B cell (primary cell): ENCODE measurements at regions of chr10 and their contacts with region 1.

Region 1: GRCh38 chr10:69408318-69409175 is 8.2 kb downstream of the TACR2 start:
- DNase-seq: peak; percentile 95
- ATAC-seq: peak; percentile 84
- H3K4me3 ChIP-seq: peak overlapping the region in 4 of 5 experiments; percentile 24 to 58 (median 40)
- H3K4me3 Mint-ChIP-seq: peak overlapping the region; percentile 81
- H3K27ac ChIP-seq: peak overlapping the region; percentile 67 to 73
- H3K27ac Mint-ChIP-seq: peak overlapping the region; percentile 89
- H3K4me1 ChIP-seq: peaks cover 21 to 39% of the 10 kb centered on the region in 2 donors
- H3K4me1 Mint-ChIP-seq: peaks cover 27% of the 10 kb centered on the region
- H3K27me3 ChIP-seq: peaks cover 0 to 4% (median 1%) of the 10 kb centered on the region in 4 experiments
- H3K27me3 Mint-ChIP-seq: peaks cover 3% of the 10 kb centered on the region
- CTCF ChIP-seq: peak; percentile 91

Region 2: GRCh38 chr10:68720793-68721672 is 687.5 kb before region 1 on chr10 and contains the start of gene CCAR1:
- CTCF ChIA-PET with region 1: no interaction called
- POLR2A ChIA-PET with region 1: no interaction called
- intact Hi-C with region 1: loop called (anchors 2 kb)
- DNase-seq: peak; percentile 99
- ATAC-seq: peak; percentile 97
- H3K4me3 ChIP-seq: peak within 1 kb of the TSS; percentile 58 to 96 (median 93)
- H3K4me3 Mint-ChIP-seq: peak within 1 kb of the TSS; percentile 96
- H3K27ac ChIP-seq: peak within 1 kb of the TSS; percentile 81 to 95
- H3K27ac Mint-ChIP-seq: peak within 1 kb of the TSS; percentile 97
- H3K4me1 ChIP-seq: peaks cover 10 to 15% of the 10 kb centered on the region in 2 donors
- H3K4me1 Mint-ChIP-seq: peaks cover 17% of the 10 kb centered on the region
- H3K27me3 ChIP-seq: no peaks in the 10 kb centered on the region
- H3K27me3 Mint-ChIP-seq: no peaks in the 10 kb centered on the region
- CTCF ChIP-seq: no peak
- total RNA-seq, gene CCAR1: 98.9 and 101 TPM in 2 replicates

Region 3: DNA sequence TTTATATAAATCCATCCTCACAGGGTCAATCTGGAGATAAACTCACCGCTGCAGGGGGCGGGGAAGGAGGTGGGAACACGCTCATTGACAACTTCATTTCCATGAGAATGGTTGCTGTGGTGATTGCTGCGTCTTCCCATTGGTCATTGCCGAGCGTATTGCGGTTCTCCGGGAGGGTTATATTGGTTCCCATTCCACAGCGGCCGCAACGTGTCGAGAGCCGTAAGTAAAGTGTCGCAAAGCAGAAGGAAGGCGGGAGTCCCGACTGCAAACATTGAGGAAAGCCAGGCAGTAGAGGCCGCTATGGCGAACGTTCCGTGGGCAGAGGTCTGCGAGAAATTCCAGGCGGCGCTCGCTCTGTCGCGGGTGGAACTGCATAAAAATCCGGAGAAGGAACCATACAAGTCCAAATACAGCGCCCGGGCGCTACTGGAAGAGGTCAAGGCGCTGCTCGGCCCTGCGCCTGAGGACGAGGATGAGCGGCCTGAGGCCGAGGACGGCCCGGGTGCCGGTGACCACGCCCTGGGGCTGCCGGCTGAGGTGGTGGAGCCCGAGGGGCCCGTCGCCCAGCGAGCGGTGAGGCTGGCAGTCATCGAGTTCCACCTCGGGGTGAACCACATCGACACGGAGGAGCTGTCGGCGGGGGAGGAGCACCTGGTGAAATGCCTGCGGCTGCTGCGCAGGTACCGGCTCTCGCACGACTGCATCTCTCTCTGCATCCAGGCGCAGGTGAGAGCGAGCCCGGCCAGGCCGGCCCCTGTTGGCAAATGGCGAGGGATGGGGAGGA is 419.8 kb before region 1 on chr10 and contains the start of gene KIFBP:
- CTCF ChIA-PET with region 1: no interaction called
- POLR2A ChIA-PET with region 1: no interaction called
- intact Hi-C with region 1: loop called (anchors 5 kb)
- DNase-seq: peak; percentile 92
- ATAC-seq: peak; percentile 87
- H3K4me3 ChIP-seq: peak within 1 kb of the TSS; percentile 67 to 90 (median 79)
- H3K4me3 Mint-ChIP-seq: peak within 1 kb of the TSS; percentile 95
- H3K27ac ChIP-seq: peak within 1 kb of the TSS in 1 of 2 donors; percentile 59
- H3K27ac Mint-ChIP-seq: peak within 1 kb of the TSS; percentile 91
- H3K4me1 ChIP-seq: peaks cover 18 to 20% of the 10 kb centered on the region in 2 donors
- H3K4me1 Mint-ChIP-seq: peaks cover 40% of the 10 kb centered on the region
- H3K27me3 ChIP-seq: no peaks in the 10 kb centered on the region
- H3K27me3 Mint-ChIP-seq: no peaks in the 10 kb centered on the region
- CTCF ChIP-seq: peak; percentile 32
- total RNA-seq, gene KIFBP: 13.5 and 15.7 TPM in 2 replicates

Region 4: DNA sequence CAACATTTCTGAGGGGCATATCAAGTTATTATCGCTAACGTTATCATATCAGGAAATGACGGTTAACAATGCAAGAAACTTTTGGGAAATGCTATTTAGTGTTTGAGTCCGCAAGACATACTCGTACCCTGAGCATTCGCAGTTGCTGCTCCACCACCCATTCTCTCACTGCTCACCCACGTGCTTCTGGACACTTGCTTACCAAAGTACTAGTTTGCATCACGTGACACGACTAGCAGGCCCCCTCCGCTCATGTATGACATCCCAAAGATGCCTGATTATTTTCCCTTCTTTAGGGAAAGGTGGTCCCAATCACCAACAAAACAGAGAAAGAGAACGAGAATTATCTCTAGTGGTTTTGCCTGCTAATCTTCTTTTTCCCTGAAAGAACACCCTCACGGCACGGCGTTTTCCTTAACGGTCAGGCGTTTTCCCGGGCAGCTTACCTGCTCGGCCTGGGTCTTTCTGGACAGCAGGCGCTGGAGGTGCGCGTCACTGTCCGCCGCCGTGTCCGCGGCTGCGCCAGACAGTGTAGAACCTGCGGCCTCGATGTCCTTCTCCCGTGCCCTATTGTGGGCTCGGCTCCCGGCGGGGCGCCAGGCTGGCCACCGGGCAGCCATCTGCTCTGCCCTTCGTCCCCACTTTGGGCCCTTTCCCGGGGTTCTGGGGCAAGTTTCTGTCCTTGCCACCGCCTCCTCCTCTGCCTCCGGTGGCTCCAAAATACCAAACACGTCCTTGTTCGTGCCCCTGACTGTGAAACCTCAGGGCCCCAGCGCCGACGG is 228.6 kb before region 1 on chr10 and contains the start of gene SUPV3L1:
- CTCF ChIA-PET with region 1: no interaction called
- POLR2A ChIA-PET with region 1: no interaction called
- intact Hi-C with region 1: loop called (anchors 1 kb)
- DNase-seq: peak; percentile 96
- ATAC-seq: peak; percentile 87
- H3K4me3 ChIP-seq: peak within 1 kb of the TSS; percentile 79 to 96 (median 94)
- H3K4me3 Mint-ChIP-seq: peak within 1 kb of the TSS; percentile 97
- H3K27ac ChIP-seq: peak within 1 kb of the TSS; percentile 91 to 99
- H3K27ac Mint-ChIP-seq: peak within 1 kb of the TSS; percentile 100
- H3K4me1 ChIP-seq: peaks cover 11 to 18% of the 10 kb centered on the region in 2 donors
- H3K4me1 Mint-ChIP-seq: peaks cover 41% of the 10 kb centered on the region
- H3K27me3 ChIP-seq: no peaks in the 10 kb centered on the region
- H3K27me3 Mint-ChIP-seq: no peaks in the 10 kb centered on the region
- CTCF ChIP-seq: no peak
- total RNA-seq, gene SUPV3L1: 37.1 and 40.4 TPM in 2 replicates

Region 5: GRCh38 chr10:69237528-69238159 is 170.9 kb before region 1 on chr10:
- CTCF ChIA-PET with region 1: interaction called, 28 read pairs
- POLR2A ChIA-PET with region 1: no interaction called
- intact Hi-C with region 1: loop called (anchors 1 kb)
- DNase-seq: peak; percentile 85
- ATAC-seq: peak; percentile 99
- H3K4me3 ChIP-seq: no peak overlapping the region
- H3K4me3 Mint-ChIP-seq: no peak overlapping the region
- H3K27ac ChIP-seq: no peak overlapping the region
- H3K27ac Mint-ChIP-seq: no peak overlapping the region
- H3K4me1 ChIP-seq: peaks cover 0 to 3% of the 10 kb centered on the region in 2 donors
- H3K4me1 Mint-ChIP-seq: no peaks in the 10 kb centered on the region
- H3K27me3 ChIP-seq: no peaks in the 10 kb centered on the region
- H3K27me3 Mint-ChIP-seq: no peaks in the 10 kb centered on the region
- CTCF ChIP-seq: peak; percentile 88

Region 6: DNA sequence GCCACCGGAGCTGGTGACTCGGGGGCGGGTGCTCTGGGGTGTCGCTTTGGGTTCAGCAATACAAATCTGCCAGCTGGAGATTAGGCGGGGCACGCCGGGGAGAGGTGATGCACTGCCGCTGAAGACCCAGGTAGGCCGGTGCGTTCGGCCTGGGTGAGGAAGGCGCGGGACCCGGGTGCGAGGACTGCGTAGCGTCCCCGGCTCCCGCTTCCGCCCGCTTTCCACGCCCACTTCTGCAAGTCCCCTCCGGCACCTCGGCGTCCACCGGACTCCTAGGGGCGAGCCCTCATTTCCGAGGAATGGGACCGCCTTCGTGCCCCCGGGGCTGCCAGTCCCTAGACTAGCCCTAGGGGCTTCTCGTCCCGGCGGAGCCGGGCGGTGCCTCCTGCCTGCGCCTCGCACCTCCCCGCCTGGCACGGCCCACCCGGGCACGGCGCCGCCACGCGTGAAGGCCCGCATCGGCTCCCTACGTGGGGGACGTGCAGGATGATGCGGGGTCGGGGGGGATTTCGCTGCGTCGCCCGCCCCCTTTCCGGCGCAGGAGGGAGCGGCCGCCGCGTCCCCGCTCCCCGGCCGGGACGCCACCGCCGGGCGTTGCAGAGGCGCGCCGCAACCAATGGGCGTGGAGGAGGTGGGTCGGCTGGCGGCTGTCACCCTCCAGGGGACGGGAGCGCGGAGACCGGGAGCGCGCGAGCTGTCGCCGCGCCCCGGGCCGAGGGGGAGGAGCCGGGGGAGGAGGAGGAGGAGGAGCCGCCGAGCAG is 90.3 kb before region 1 on chr10:
- CTCF ChIA-PET with region 1: interaction called, 8 read pairs
- POLR2A ChIA-PET with region 1: interaction called, 7 read pairs
- intact Hi-C with region 1: loop called (anchors 1 kb)
- DNase-seq: peak; percentile 93
- ATAC-seq: peak; percentile 93
- H3K4me3 ChIP-seq: peak overlapping the region; percentile 3 to 98 (median 94)
- H3K4me3 Mint-ChIP-seq: peak overlapping the region; percentile 96
- H3K27ac ChIP-seq: peak overlapping the region; percentile 82 to 85
- H3K27ac Mint-ChIP-seq: peak overlapping the region; percentile 91
- H3K4me1 ChIP-seq: peaks cover 22 to 31% of the 10 kb centered on the region in 2 donors
- H3K4me1 Mint-ChIP-seq: peaks cover 37% of the 10 kb centered on the region
- H3K27me3 ChIP-seq: no peaks in the 10 kb centered on the region
- H3K27me3 Mint-ChIP-seq: no peaks in the 10 kb centered on the region
- CTCF ChIP-seq: no peak

Region 7: DNA sequence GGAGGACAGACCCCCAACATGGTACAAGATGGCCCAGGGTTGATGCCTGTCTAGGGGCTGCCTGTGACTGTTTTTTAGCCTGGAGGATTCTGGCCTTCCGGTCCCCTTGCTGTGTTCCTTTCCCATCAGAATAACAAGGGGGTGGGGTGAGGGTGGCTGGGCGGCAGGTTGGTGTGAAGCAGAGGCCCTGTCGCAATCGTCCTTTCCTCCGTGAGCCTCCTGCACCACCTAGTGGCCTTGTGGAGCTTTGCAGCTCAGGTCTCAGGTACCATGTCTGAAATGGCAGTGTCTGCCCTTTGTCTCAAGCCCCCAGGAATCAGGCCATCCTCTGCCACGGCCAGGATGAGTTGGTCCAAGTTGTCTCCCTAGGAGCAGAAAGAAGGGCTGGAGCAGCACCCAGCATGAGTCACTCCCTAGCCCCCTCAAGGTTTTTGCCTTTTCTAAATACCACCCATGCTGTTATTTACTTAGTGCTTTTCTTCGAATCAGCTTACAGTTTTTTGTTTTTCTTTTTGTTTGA is 16.0 kb before region 1 on chr10:
- CTCF ChIA-PET with region 1: interaction called, 10 read pairs
- POLR2A ChIA-PET with region 1: no interaction called
- intact Hi-C with region 1: no loop called
- DNase-seq: peak; percentile 86
- ATAC-seq: peak; percentile 100
- H3K4me3 ChIP-seq: no peak overlapping the region
- H3K4me3 Mint-ChIP-seq: no peak overlapping the region
- H3K27ac ChIP-seq: peak overlapping the region in 1 of 2 donors; percentile 11
- H3K27ac Mint-ChIP-seq: peak overlapping the region; percentile 50
- H3K4me1 ChIP-seq: peaks cover 5 to 14% of the 10 kb centered on the region in 2 donors
- H3K4me1 Mint-ChIP-seq: peaks cover 14% of the 10 kb centered on the region
- H3K27me3 ChIP-seq: no peaks in the 10 kb centered on the region
- H3K27me3 Mint-ChIP-seq: no peaks in the 10 kb centered on the region
- CTCF ChIP-seq: peak; percentile 87